Endothelial cell of umbilical vein (primary cell): ENCODE measurements at regions of chr5 and their contacts with region 1.

Region 1: DNA sequence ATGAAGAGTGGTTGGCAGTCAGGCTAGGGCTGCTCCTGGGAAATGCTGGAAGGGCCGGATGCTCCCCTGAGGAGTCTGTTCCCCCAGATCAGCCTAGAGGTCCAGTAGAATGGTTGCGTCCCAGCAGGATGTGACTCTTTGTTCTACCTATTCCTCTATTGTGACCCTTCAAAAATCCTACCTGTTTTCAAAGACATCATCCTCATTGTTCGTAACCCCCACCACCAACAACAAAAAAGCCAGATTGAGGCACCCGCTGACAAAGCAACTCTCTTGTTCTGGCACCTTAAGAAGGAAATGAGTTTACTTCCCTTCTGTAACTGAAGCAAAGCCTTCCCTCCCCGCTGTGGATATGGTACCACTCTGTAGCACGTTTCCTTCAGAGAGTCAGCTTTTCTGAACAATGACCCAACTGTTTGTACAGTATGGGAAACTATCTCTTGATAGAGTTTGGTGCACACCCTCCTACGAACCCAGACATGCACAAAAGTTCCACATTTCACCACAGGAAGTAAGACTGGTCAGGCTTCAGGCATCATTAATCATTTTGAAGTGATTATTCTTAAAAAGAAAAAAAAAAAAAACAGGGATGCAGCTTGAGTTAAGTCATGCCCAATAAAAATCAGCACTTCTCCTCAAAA is 207.2 kb downstream of the ENC1 start:
- DNase-seq: peak; percentile 87
- H3K4me3 ChIP-seq: peak overlapping the region in 1 of 3 experiments; percentile 13
- H3K27ac ChIP-seq: peak overlapping the region; percentile 86
- H3K4me1 ChIP-seq: peaks cover 28% of the 10 kb centered on the region
- H3K27me3 ChIP-seq: no peaks in the 10 kb centered on the region
- CTCF ChIP-seq: no peak
- POLR2A ChIP-seq: no peak

Region 2: GRCh38 chr5:74035521-74035981 is 397.8 kb before region 1 on chr5:
- CTCF ChIA-PET with region 1: no interaction called
- POLR2A ChIA-PET with region 1: no interaction called
- dilution Hi-C with region 1: no loop called
- intact Hi-C with region 1: loop called (anchors 10 kb)
- DNase-seq: peak; percentile 57
- H3K4me3 ChIP-seq: no peak overlapping the region
- H3K27ac ChIP-seq: no peak overlapping the region
- H3K4me1 ChIP-seq: peaks cover 2% of the 10 kb centered on the region
- H3K27me3 ChIP-seq: peaks cover 0 to 2% of the 10 kb centered on the region in 2 experiments
- CTCF ChIP-seq: peak in 1 of 2 donors; percentile 27
- POLR2A ChIP-seq: no peak

Region 3: GRCh38 chr5:74415695-74416102 is 17.7 kb before region 1 on chr5:
- CTCF ChIA-PET with region 1: interaction called, 11 read pairs
- POLR2A ChIA-PET with region 1: no interaction called
- dilution Hi-C with region 1: no loop called
- intact Hi-C with region 1: loop called (anchors 1 kb)
- DNase-seq: peak; percentile 90
- H3K4me3 ChIP-seq: no peak overlapping the region
- H3K27ac ChIP-seq: peak overlapping the region; percentile 63
- H3K4me1 ChIP-seq: peaks cover 27% of the 10 kb centered on the region
- H3K27me3 ChIP-seq: no peaks in the 10 kb centered on the region
- CTCF ChIP-seq: no peak
- POLR2A ChIP-seq: peak; percentile 30

Region 4: GRCh38 chr5:74589204-74590056 is 156.1 kb after region 1 on chr5:
- CTCF ChIA-PET with region 1: no interaction called
- POLR2A ChIA-PET with region 1: no interaction called
- dilution Hi-C with region 1: no loop called
- intact Hi-C with region 1: loop called (anchors 5 kb)
- DNase-seq: no peak
- H3K4me3 ChIP-seq: no peak overlapping the region
- H3K27ac ChIP-seq: no peak overlapping the region
- H3K4me1 ChIP-seq: peaks cover 41% of the 10 kb centered on the region
- H3K27me3 ChIP-seq: no peaks in the 10 kb centered on the region
- CTCF ChIP-seq: no peak
- POLR2A ChIP-seq: no peak

Region 5: DNA sequence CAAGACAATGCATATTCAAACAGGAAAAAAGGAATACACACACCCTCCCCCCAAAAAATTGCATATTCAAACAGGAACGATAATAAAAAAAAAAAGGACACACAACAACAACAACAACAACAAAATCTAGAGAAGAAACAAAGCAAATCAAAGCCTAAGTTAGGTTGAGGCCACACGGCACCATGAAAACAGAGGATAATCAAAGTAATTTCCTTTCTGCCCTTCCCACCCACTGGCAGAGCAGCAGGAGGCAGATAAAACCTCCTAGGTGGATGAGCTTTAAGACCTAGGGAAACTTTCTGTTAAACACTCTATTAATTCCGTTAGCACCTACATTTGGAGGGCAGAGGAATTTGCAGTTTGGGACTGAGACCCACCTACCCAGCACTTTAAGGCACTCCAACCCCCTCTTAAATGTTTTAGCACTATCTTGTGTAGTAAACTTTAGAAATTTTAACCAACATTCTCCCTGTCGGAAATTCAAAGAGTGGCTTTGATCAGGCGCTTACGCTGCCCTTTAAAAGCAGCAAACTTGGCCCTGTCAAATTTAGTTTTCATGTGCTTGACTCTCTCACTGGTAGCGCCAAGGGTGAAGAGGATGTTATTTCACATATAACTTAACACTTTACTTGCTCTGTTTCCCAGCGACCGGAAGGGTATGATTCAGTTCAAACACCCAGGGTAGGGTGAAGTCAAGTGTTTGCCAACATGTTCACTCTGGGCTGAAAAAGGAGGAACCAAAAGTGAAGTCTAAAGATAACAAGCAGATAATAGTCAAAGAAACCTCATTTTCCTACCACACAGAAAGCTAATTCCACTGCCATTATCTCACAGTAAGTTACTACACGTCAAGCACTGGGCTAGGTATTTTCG is 197.9 kb after region 1 on chr5:
- CTCF ChIA-PET with region 1: no interaction called
- POLR2A ChIA-PET with region 1: no interaction called
- dilution Hi-C with region 1: no loop called
- intact Hi-C with region 1: loop called (anchors 1 kb)
- DNase-seq: peak; percentile 86
- H3K4me3 ChIP-seq: peak overlapping the region in 1 of 3 experiments; percentile 36
- H3K27ac ChIP-seq: peak overlapping the region; percentile 98
- H3K4me1 ChIP-seq: peaks cover 53% of the 10 kb centered on the region
- H3K27me3 ChIP-seq: no peaks in the 10 kb centered on the region
- CTCF ChIP-seq: no peak
- POLR2A ChIP-seq: no peak